ENCODE measurements at regions of chr9 and their contacts with region 1.

Region 1: GRCh38 chr9:134689321-134690181 is 47.9 kb downstream of the COL5A1 start:
- DNase-seq: no peak
- H3K4me3 ChIP-seq: no peak overlapping the region
- H3K27me3 ChIP-seq: no peaks in the 10 kb centered on the region
- CTCF ChIP-seq: peak; percentile 91

Region 2: DNA sequence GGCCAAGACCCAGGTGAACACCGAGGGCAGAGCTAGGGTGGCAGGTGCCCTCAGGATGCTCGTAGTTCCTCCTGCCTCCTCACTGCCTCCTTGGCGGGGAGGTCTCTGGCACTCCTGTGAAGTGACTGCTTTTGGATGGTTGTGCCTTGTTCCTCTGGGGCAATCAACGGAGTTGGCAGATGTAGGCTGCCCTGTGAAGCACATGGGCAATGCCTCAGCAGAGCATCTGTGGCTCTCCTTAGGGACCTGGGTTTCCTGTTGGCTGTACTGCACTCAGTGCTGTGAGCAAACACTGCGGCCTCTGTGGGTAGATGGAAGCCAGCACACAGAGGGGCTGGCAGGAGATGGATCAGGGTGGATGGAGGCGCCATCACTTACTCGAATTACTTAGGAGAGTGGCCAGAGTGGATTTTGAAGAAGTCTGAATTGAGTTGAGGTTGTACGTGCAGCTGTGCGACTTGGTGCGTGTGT is 119.4 kb before region 1 on chr9:
- CTCF ChIA-PET with region 1: no interaction called
- POLR2A ChIA-PET with region 1: no interaction called
- DNase-seq: no peak
- H3K4me3 ChIP-seq: no peak overlapping the region
- H3K27me3 ChIP-seq: no peaks in the 10 kb centered on the region
- CTCF ChIP-seq: no peak

Region 3: GRCh38 chr9:134670042-134670525 is 19.5 kb before region 1 on chr9:
- CTCF ChIA-PET with region 1: interaction called, 25 read pairs
- POLR2A ChIA-PET with region 1: no interaction called
- DNase-seq: peak; percentile 87
- H3K4me3 ChIP-seq: no peak overlapping the region
- H3K27me3 ChIP-seq: no peaks in the 10 kb centered on the region
- CTCF ChIP-seq: no peak

Region 4: GRCh38 chr9:134704498-134704897 is 14.9 kb after region 1 on chr9:
- CTCF ChIA-PET with region 1: interaction called, 20 read pairs
- POLR2A ChIA-PET with region 1: no interaction called
- DNase-seq: no peak
- H3K4me3 ChIP-seq: no peak overlapping the region
- H3K27me3 ChIP-seq: no peaks in the 10 kb centered on the region
- CTCF ChIP-seq: no peak

Measured in BJ (cell line).